ENCODE measurements at regions of chr10 and their contacts with region 1.

Region 1: DNA sequence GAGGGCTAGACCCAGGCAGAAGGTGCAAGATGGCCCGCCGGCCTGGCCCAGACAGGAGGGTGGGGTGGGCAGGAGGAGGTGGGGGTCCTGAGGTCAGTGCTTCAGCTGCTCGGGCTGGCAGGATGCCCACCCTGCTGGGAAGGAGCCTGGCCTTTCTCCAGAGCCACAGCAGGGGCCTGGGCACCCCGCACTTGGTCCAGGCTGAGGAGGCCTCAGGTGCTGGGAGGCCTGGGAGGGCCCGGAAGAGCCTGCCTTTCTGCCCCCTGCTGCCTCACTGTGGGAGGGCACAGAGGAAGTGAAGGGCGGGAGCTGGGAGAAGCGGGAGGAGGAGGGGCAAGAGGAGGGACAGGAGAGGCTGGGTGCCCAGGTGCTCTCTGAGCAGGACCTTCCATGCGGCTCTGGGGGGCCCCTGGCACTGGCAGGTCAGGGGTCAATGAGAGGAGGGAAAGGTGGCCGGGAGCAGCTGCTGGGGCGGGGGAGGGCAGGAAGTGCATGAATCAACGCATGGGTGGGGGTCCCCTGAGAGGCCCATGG is 49.7 kb downstream of the PWWP2B start:
- DNase-seq: no peak

Region 2: GRCh38 chr10:132396495-132397035 is 50.2 kb before region 1 on chr10:
- intact Hi-C with region 1: loop called (anchors 5 kb)
- DNase-seq: no peak

Region 3: DNA sequence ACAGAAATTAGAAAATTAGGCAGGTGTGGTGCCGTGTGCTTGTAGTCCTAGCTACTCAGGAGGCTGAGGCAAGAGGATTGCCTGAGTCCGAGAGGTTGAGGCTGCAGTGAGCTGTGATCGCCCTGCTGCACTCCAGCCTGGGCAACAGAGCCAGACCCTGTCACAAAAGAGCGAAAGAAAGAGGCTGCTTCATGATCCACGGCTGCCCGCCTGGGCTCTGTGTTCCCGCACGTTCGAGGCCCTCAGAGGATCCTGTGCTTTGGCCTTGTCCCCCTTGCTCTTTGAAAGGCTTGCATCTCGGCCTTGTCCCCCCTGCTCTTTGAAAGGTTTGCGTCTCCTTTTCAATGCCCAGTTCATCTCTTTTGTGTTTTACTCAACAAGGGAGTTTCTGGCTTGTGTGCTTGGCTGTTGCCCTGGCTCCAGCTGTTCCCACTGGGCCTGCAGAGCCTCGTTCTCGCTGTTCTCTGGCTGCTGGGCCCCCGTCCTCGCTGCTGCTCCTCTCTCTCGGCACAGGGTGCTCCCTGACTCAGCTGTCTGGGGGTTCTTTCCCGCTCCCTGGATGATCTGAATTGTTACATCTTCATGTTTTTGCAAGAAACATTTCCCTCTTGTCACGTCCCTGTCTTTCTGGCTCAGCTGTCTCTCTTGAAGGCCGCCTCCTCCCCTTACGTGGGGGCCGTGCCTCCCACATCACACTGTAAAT is 45.7 kb after region 1 on chr10:
- intact Hi-C with region 1: loop called in 1 of 2 experiments (anchors 1 kb)
- DNase-seq: peak; percentile 84